ENCODE measurements at regions of chr20 and their contacts with region 1.

Region 1: DNA sequence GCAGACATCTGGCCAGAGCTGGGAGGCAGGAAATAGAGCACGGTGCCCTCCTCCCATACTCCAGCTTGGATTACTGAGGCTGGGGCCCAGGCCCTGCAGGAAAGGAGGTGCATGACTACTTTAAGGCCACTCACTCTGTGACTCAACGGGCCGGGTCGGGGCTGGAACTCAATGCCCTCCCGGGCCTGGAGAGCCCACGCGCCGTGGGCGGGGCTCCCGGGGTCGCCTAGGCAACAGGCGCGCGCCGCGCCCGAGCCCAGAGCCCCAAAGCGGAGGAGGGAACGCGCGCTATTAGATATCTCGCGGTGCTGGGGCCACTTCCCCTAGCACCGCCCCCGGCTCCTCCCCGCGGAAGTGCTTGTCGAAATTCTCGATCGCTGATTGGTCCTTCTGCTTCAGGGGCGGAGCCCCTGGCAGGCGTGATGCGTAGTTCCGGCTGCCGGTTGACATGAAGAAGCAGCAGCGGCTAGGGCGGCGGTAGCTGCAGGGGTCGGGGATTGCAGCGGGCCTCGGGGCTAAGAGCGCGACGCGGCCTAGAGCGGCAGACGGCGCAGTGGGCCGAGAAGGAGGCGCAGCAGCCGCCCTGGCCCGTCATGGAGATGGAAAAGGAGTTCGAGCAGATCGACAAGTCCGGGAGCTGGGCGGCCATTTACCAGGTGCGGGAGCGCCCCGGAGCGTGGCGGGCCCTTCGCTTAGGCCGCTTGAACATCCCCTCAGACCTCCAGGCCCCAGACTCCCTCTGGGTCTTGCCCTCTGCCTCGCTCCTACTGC is at the start of gene PTPN1:
- DNase-seq: peak; percentile 100
- ATAC-seq: peak; percentile 92
- H3K4me3 ChIP-seq: peak within 1 kb of the TSS; percentile 67 to 100 (median 95)
- H3K4me3 Mint-ChIP-seq: peak within 1 kb of the TSS; percentile 98
- H3K27ac ChIP-seq: peak within 1 kb of the TSS; percentile 91 to 95
- H3K27ac Mint-ChIP-seq: peak within 1 kb of the TSS; percentile 92
- H3K4me1 ChIP-seq: peaks cover 45 to 50% of the 10 kb centered on the region in 2 donors
- H3K4me1 Mint-ChIP-seq: peaks cover 50% of the 10 kb centered on the region
- H3K27me3 ChIP-seq: no peaks in the 10 kb centered on the region
- H3K27me3 Mint-ChIP-seq: no peaks in the 10 kb centered on the region
- CTCF ChIP-seq: no peak
- total RNA-seq, gene PTPN1: 134 TPM in 2 replicates

Region 2: DNA sequence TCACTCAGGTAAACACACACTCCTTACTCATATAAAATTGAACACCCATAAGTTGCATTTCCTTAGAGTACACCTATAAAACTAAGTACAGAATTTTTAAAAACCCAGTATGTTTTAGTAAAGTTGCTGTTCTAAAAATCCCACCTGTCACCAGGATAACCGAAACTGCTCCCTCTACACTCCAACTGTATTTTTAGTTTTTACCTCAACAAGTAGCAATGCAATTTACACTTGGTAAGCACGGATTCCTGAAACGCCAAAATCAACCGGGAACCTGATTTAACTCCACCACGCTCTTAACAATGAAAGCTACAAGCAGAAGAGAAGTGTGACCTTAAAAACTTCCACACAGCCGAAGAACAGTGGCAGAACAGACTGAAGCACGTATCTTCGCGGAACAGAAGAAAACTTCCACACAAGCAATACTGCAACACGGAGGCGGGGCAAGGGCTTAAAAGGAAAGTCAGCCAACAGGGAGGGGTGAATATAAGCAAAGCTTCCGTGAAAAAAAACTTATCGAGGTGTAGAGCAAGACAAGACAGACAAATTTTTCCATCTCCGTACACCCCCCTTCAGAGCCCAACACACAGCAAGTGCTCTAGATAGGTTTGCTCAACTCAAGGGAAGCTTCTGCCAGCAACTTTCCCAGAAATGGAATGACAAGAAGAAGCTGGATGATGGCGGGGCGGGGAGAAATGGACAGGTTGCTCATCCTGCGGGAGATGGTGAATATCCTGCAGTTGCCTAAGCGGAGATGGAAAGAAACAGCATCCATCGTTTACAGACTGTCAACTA is 1323.4 kb before region 1 on chr20:
- CTCF ChIA-PET with region 1: no interaction called
- POLR2A ChIA-PET with region 1: no interaction called
- intact Hi-C with region 1: loop called (anchors 10 kb)
- DNase-seq: peak; percentile 68
- ATAC-seq: no peak
- H3K4me3 ChIP-seq: peak overlapping the region; percentile 54 to 74 (median 67)
- H3K4me3 Mint-ChIP-seq: peak overlapping the region; percentile 88
- H3K27ac ChIP-seq: peak overlapping the region; percentile 79 to 84
- H3K27ac Mint-ChIP-seq: peak overlapping the region; percentile 74
- H3K4me1 ChIP-seq: peaks cover 14 to 20% of the 10 kb centered on the region in 2 donors
- H3K4me1 Mint-ChIP-seq: peaks cover 46% of the 10 kb centered on the region
- H3K27me3 ChIP-seq: no peaks in the 10 kb centered on the region
- H3K27me3 Mint-ChIP-seq: no peaks in the 10 kb centered on the region
- CTCF ChIP-seq: no peak

Region 3: DNA sequence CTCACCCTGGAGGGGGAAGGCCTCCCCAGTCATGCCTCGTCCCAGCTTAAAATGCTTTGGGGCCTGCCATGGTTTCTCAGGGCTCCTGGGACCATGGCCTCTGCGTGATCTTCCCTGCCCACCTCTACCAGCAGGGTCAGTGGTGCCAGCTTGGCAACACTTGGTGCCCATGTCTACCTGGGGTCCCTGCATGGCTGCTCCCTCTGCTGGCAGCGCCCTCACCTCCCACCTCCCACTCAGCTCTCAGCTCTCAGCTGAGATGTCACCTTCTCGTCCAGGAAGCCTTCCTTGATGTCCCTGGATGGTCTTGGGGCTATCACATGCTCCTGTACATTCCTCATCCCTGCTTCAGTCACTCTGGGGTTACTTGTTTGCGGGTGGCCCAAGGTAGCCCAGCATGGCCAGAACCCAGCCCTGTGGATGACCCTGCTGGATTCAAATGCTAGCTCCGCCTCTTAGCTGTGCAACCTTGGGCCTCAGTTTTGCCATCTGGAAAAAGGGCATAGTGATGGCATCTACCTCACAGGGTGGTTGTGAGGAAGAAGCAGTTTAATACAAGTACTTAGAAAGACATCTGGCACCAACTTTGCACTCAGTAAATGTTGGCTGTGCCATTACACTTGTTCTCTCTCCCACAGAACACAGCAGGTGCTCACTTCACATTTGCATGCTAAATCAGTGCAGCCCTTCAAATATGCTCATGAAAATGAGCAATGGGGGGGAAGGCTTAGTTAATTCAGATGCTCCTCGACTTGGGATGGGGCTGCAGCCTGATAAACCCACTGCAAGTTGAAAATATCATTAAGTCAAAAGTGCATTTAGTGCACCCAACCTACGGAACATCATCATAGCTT is 53.4 kb before region 1 on chr20:
- CTCF ChIA-PET with region 1: no interaction called
- POLR2A ChIA-PET with region 1: no interaction called
- intact Hi-C with region 1: no loop called
- DNase-seq: no peak
- ATAC-seq: no peak
- H3K4me3 ChIP-seq: no peak overlapping the region
- H3K4me3 Mint-ChIP-seq: no peak overlapping the region
- H3K27ac ChIP-seq: no peak overlapping the region
- H3K27ac Mint-ChIP-seq: no peak overlapping the region
- H3K4me1 ChIP-seq: no peaks in the 10 kb centered on the region
- H3K4me1 Mint-ChIP-seq: no peaks in the 10 kb centered on the region
- H3K27me3 ChIP-seq: peaks cover 0 to 28% (median 3%) of the 10 kb centered on the region in 4 experiments
- H3K27me3 Mint-ChIP-seq: peaks cover 50% of the 10 kb centered on the region
- CTCF ChIP-seq: no peak

Region 4: GRCh38 chr20:50478162-50479036 is 31.7 kb before region 1 on chr20:
- CTCF ChIA-PET with region 1: interaction called, 26 read pairs
- POLR2A ChIA-PET with region 1: interaction called, 5 read pairs
- intact Hi-C with region 1: loop called (anchors 1 kb)
- DNase-seq: peak; percentile 84
- ATAC-seq: peak; percentile 99
- H3K4me3 ChIP-seq: no peak overlapping the region
- H3K4me3 Mint-ChIP-seq: peak overlapping the region; percentile 44
- H3K27ac ChIP-seq: no peak overlapping the region
- H3K27ac Mint-ChIP-seq: peak overlapping the region; percentile 67
- H3K4me1 ChIP-seq: peaks cover 20 to 32% of the 10 kb centered on the region in 2 donors
- H3K4me1 Mint-ChIP-seq: peaks cover 33% of the 10 kb centered on the region
- H3K27me3 ChIP-seq: no peaks in the 10 kb centered on the region
- H3K27me3 Mint-ChIP-seq: no peaks in the 10 kb centered on the region
- CTCF ChIP-seq: peak; percentile 73

Region 5: GRCh38 chr20:50523552-50524167 is 13.5 kb after region 1 on chr20:
- CTCF ChIA-PET with region 1: interaction called, 18 read pairs
- POLR2A ChIA-PET with region 1: interaction called, 4 read pairs
- intact Hi-C with region 1: loop called (anchors 1 kb)
- DNase-seq: peak; percentile 46
- ATAC-seq: peak; percentile 37
- H3K4me3 ChIP-seq: peak overlapping the region in 4 of 5 experiments; percentile 9 to 26 (median 13)
- H3K4me3 Mint-ChIP-seq: peak overlapping the region; percentile 54
- H3K27ac ChIP-seq: peak overlapping the region; percentile 53 to 95
- H3K27ac Mint-ChIP-seq: peak overlapping the region; percentile 88
- H3K4me1 ChIP-seq: peaks cover 94 to 95% of the 10 kb centered on the region in 2 donors
- H3K4me1 Mint-ChIP-seq: peaks cover 51% of the 10 kb centered on the region
- H3K27me3 ChIP-seq: no peaks in the 10 kb centered on the region
- H3K27me3 Mint-ChIP-seq: no peaks in the 10 kb centered on the region
- CTCF ChIP-seq: no peak

Region 6: GRCh38 chr20:50546729-50547314 is 36.7 kb after region 1 on chr20:
- CTCF ChIA-PET with region 1: interaction called, 79 read pairs
- POLR2A ChIA-PET with region 1: interaction called, 19 read pairs
- intact Hi-C with region 1: no loop called
- DNase-seq: peak; percentile 70
- ATAC-seq: peak; percentile 78
- H3K4me3 ChIP-seq: peak overlapping the region in 4 of 5 experiments; percentile 2 to 39 (median 20)
- H3K4me3 Mint-ChIP-seq: peak overlapping the region; percentile 88
- H3K27ac ChIP-seq: peak overlapping the region; percentile 48 to 83
- H3K27ac Mint-ChIP-seq: peak overlapping the region; percentile 93
- H3K4me1 ChIP-seq: peaks cover 93 to 96% of the 10 kb centered on the region in 2 donors
- H3K4me1 Mint-ChIP-seq: peaks cover 68% of the 10 kb centered on the region
- H3K27me3 ChIP-seq: no peaks in the 10 kb centered on the region
- H3K27me3 Mint-ChIP-seq: no peaks in the 10 kb centered on the region
- CTCF ChIP-seq: no peak

Region 7: GRCh38 chr20:50575847-50576720 is 66.0 kb after region 1 on chr20:
- CTCF ChIA-PET with region 1: interaction called, 292 read pairs
- POLR2A ChIA-PET with region 1: interaction called, 3 read pairs
- intact Hi-C with region 1: no loop called
- DNase-seq: peak; percentile 74
- ATAC-seq: peak; percentile 85
- H3K4me3 ChIP-seq: no peak overlapping the region
- H3K4me3 Mint-ChIP-seq: no peak overlapping the region
- H3K27ac ChIP-seq: no peak overlapping the region
- H3K27ac Mint-ChIP-seq: peak overlapping the region; percentile 78
- H3K4me1 ChIP-seq: peaks cover 18 to 34% of the 10 kb centered on the region in 2 donors
- H3K4me1 Mint-ChIP-seq: peaks cover 48% of the 10 kb centered on the region
- H3K27me3 ChIP-seq: no peaks in the 10 kb centered on the region
- H3K27me3 Mint-ChIP-seq: no peaks in the 10 kb centered on the region
- CTCF ChIP-seq: peak; percentile 70

Measured in B cell (primary cell).